ENCODE measurements at regions of chr20 and their contacts with region 1.

Region 1: DNA sequence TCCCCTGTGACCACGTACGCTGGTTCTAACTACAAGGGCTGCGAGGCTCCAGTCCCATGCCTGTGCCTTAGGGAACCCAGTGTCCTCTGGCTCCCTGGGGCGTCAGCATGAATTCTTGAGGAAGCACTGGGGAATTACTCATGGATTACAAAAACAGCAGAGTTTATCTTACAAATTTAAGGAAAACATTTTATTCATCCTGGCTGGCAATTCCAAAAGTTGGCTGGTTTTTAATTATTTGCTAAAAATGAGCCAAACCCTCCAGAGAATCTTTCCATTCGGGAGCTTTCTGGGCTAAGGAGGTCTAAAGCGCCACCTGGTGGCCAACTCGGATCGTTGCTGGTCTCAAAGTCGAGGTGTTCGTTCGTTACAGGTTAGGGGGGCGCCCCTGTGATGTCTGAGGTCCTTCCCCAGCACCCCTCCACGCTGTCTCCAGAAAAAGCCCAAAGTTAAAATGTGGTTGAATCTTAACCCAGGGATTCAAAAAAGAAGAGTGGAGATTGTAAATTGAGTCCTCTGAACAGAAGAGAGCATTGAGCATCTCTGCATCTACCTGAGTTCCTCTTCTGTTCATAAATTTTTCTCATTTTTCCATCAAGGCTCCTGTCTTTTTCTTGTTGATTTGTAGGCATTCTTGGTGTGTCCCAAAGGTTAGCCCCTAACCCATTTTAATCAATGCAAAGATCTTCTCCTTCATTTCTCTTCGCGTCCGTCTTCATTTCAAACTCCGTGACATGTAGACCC is 99.4 kb downstream of the BFSP1 start:
- DNase-seq: peak in 4 of 5 donors; percentile 13 to 32 (median 20)
- H3K4me3 ChIP-seq: no peak overlapping the region
- H3K4me3 Mint-ChIP-seq: no peak overlapping the region
- H3K27ac ChIP-seq: no peak overlapping the region
- H3K27ac Mint-ChIP-seq: peak overlapping the region in 1 of 7 donors; percentile 38
- H3K4me1 ChIP-seq: no peaks in the 10 kb centered on the region
- H3K4me1 Mint-ChIP-seq: peaks cover 0 to 2% (median under 1%) of the 10 kb centered on the region in 4 donors
- H3K27me3 ChIP-seq: no peaks in the 10 kb centered on the region
- H3K27me3 Mint-ChIP-seq: peaks cover 10 to 20% of the 10 kb centered on the region in 2 donors

Region 2: GRCh38 chr20:16801919-16802911 is 629.6 kb before region 1 on chr20:
- CTCF ChIA-PET with region 1: interaction called, 16 read pairs
- POLR2A ChIA-PET with region 1: no interaction called
- intact Hi-C with region 1: no loop called
- DNase-seq: peak; percentile 20 to 45 (median 32)
- H3K4me3 ChIP-seq: no peak overlapping the region
- H3K4me3 Mint-ChIP-seq: no peak overlapping the region
- H3K27ac ChIP-seq: no peak overlapping the region
- H3K27ac Mint-ChIP-seq: no peak overlapping the region
- H3K4me1 ChIP-seq: no peaks in the 10 kb centered on the region
- H3K4me1 Mint-ChIP-seq: peaks cover 0 to 1% (median 0%) of the 10 kb centered on the region in 4 donors
- H3K27me3 ChIP-seq: no peaks in the 10 kb centered on the region
- H3K27me3 Mint-ChIP-seq: peaks cover 32 to 37% of the 10 kb centered on the region in 2 donors

Region 3: GRCh38 chr20:17391127-17391771 is 40.5 kb before region 1 on chr20:
- CTCF ChIA-PET with region 1: no interaction called
- POLR2A ChIA-PET with region 1: no interaction called
- intact Hi-C with region 1: no loop called
- DNase-seq: no peak
- H3K4me3 ChIP-seq: no peak overlapping the region
- H3K4me3 Mint-ChIP-seq: no peak overlapping the region
- H3K27ac ChIP-seq: no peak overlapping the region
- H3K27ac Mint-ChIP-seq: no peak overlapping the region
- H3K4me1 ChIP-seq: no peaks in the 10 kb centered on the region
- H3K4me1 Mint-ChIP-seq: no peaks in the 10 kb centered on the region
- H3K27me3 ChIP-seq: no peaks in the 10 kb centered on the region
- H3K27me3 Mint-ChIP-seq: peaks cover 10 to 20% of the 10 kb centered on the region in 2 donors

Region 4: GRCh38 chr20:17421493-17421892 is 10.3 kb before region 1 on chr20:
- CTCF ChIA-PET with region 1: interaction called, 34 read pairs
- POLR2A ChIA-PET with region 1: no interaction called
- intact Hi-C with region 1: no loop called
- DNase-seq: no peak
- H3K4me3 ChIP-seq: no peak overlapping the region
- H3K4me3 Mint-ChIP-seq: no peak overlapping the region
- H3K27ac ChIP-seq: no peak overlapping the region
- H3K27ac Mint-ChIP-seq: no peak overlapping the region
- H3K4me1 ChIP-seq: no peaks in the 10 kb centered on the region
- H3K4me1 Mint-ChIP-seq: no peaks in the 10 kb centered on the region
- H3K27me3 ChIP-seq: no peaks in the 10 kb centered on the region
- H3K27me3 Mint-ChIP-seq: peaks cover 12 to 22% of the 10 kb centered on the region in 2 donors

Region 5: DNA sequence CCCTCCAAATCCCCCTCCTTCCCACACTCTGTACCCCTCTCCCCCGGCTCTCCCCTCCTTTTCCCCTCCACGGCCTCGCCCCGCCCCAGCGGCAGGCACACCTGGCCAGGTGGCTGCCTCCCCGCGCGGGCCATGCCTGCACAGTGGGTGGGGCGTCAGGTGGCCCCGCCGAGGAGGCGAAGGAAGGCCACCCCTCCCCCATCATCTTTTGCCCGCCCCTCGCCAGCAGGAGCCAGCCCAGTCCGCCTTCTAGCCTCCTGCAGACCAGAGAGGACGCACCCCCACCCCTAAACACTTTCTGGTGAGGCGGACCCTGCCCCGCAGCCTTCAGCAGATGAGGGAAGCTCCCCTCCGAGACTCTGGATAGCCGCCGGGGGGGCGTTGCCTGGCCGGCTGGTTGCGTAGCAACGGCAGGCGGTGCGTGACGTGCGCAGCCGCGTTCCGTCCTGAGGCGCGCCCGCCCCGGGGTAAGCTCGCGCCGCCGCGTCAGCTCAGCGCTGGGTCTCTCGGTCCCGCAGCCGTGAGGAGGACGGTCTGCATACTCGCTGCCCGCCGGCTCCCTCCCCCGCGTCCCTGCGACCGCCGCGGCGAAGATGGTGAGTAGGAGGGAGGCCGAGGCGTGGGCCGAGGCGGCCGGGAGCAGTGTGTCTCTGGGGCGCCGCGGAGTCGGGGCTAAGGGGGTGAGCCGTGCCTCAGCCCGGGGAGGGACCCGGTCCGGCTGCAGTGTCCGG is 138.0 kb after region 1 on chr20 and contains the start of gene DSTN:
- CTCF ChIA-PET with region 1: no interaction called
- POLR2A ChIA-PET with region 1: no interaction called
- intact Hi-C with region 1: no loop called
- DNase-seq: peak; percentile 87 to 91 (median 90)
- H3K4me3 ChIP-seq: peak within 1 kb of the TSS; percentile 73 to 84
- H3K4me3 Mint-ChIP-seq: peak within 1 kb of the TSS; percentile 94 to 97 (median 96)
- H3K27ac ChIP-seq: peak within 1 kb of the TSS; percentile 83
- H3K27ac Mint-ChIP-seq: peak within 1 kb of the TSS; percentile 70 to 97 (median 96)
- H3K4me1 ChIP-seq: peaks cover 35% of the 10 kb centered on the region
- H3K4me1 Mint-ChIP-seq: peaks cover 23 to 37% (median 28%) of the 10 kb centered on the region in 4 donors
- H3K27me3 ChIP-seq: no peaks in the 10 kb centered on the region
- H3K27me3 Mint-ChIP-seq: no peaks in the 10 kb centered on the region
- total RNA-seq, gene DSTN: 43.1 to 49.1 TPM

Region 6: GRCh38 chr20:17806739-17807441 is 375.1 kb after region 1 on chr20:
- CTCF ChIA-PET with region 1: no interaction called
- POLR2A ChIA-PET with region 1: no interaction called
- intact Hi-C with region 1: no loop called
- DNase-seq: no peak
- H3K4me3 ChIP-seq: no peak overlapping the region
- H3K4me3 Mint-ChIP-seq: no peak overlapping the region
- H3K27ac ChIP-seq: no peak overlapping the region
- H3K27ac Mint-ChIP-seq: no peak overlapping the region
- H3K4me1 ChIP-seq: no peaks in the 10 kb centered on the region
- H3K4me1 Mint-ChIP-seq: no peaks in the 10 kb centered on the region
- H3K27me3 ChIP-seq: no peaks in the 10 kb centered on the region
- H3K27me3 Mint-ChIP-seq: peaks cover 0 to 6% of the 10 kb centered on the region in 2 donors

Measured in CD4-positive, alpha-beta memory T cell (primary cell).